ENCODE measurements at regions of chr2 and their contacts with region 1.

Region 1: GRCh38 chr2:620471-621302 is 56.5 kb downstream of the TMEM18 start:
- DNase-seq: no peak
- ATAC-seq: no peak
- H3K4me3 ChIP-seq: no peak overlapping the region
- H3K27ac ChIP-seq: no peak overlapping the region
- H3K4me1 ChIP-seq: no peaks in the 10 kb centered on the region
- H3K27me3 ChIP-seq: no peaks in the 10 kb centered on the region

Region 2: DNA sequence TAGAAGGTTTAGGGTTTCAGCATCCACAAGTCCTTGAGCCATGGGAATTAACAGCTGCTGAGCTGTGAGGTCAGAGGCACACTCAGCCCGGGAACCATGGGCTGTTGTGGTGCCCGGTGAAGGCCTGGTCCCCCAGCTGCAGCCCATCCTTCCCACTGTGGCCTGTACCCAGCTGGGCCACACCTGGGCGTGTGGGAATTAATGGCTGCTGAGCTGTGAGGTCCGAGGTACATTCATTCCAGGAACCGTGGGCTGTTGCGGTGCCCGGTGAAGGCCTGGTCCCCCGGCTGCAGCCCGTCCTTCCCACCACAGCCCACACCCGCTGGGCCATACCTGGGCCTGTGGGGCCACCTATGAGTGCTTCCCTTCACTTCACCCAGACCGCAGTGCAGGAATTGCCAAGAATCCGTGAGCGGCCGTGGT is 31.3 kb after region 1 on chr2:
- intact Hi-C with region 1: loop called in 1 of 2 experiments (anchors 2 kb)
- DNase-seq: no peak
- ATAC-seq: no peak
- H3K4me3 ChIP-seq: no peak overlapping the region
- H3K27ac ChIP-seq: no peak overlapping the region
- H3K4me1 ChIP-seq: no peaks in the 10 kb centered on the region
- H3K27me3 ChIP-seq: no peaks in the 10 kb centered on the region